Mammary epithelial cell (primary cell): ENCODE measurements at regions of chr10 and their contacts with region 1.

Region 1: DNA sequence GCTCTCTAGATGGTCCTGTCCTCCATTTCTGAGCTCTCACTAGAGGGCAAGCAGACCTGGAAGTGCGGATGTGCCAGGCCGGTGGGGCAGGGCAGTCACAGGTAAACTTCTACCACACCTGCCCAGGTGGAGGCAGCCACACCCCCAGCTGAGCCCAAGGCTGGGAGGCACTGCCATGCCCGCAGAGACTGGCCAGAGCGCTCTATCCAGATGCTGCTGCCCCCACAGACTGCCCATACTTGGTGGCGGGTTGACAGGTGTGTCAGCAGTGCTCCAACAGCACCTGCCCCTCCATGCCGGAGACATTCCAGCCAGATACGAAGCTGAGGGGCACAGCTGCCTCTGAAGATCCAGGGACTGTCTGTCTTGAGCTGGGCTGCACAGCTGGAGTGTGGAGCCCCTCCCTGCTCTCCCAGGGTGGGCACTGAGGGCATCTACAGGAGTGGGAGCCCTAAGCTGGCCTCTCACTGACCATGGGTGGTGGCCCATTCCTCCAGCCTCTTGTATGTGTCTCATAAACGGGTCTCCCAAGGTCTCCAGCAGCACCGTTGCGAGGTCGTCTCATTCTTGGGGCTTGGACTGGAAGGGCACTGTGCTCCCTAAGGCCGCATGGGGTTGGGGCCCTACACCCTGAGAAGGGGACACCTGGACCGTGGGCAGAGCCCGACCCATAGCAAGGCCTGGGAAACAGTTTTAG is 38.2 kb upstream of the PPIF start:
- DNase-seq: no peak
- H3K4me3 ChIP-seq: no peak overlapping the region
- H3K27ac ChIP-seq: no peak overlapping the region
- H3K4me1 ChIP-seq: peaks cover 7% of the 10 kb centered on the region
- H3K27me3 ChIP-seq: no peaks in the 10 kb centered on the region
- CTCF ChIP-seq: no peak

Region 2: GRCh38 chr10:79068562-79069324 is 240.4 kb before region 1 on chr10 and contains the start of gene ZMIZ1:
- CTCF ChIA-PET with region 1: no interaction called
- dilution Hi-C with region 1: no loop called
- in situ Hi-C with region 1: no loop called
- intact Hi-C with region 1: no loop called
- DNase-seq: peak; percentile 89
- H3K4me3 ChIP-seq: peak within 1 kb of the TSS; percentile 62 to 84 (median 70)
- H3K27ac ChIP-seq: peak within 1 kb of the TSS; percentile 35
- H3K4me1 ChIP-seq: peaks cover 33% of the 10 kb centered on the region
- H3K27me3 ChIP-seq: no peaks in the 10 kb centered on the region
- CTCF ChIP-seq: peak; percentile 9 to 46
- total RNA-seq, gene ZMIZ1: 22.3 to 25.0 TPM

Region 3: DNA sequence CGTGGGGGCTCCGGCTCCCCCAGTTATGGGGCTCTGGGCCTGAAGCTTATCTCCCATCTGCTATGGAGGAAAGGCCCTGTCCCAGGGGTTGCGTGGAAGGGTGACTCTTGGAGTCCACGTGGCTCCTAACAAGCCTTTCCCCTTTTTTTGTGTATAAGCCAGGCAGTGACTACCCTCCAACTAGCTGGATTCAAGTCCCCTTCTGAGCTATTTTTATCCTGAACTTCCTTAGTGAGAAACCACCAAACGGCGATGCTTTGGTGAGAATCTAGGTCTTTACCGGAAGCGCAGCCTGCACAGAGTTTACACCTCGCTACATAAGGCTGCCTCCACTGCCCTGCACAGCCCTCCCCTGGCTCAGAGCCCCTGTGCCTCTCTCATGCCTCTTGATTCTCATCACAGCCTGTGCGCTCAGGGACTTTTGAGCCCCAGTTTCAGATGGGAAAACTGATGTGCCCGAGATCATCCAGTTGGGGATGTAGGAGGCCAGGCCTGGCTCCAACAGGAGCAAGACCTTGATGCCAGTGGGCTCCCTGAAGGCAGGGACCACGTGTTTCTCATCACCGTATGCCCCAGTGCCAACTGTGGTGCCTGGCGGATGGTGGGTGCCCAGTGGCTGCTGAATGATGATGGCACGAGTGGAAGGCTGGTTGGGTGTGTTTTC is 64.1 kb before region 1 on chr10:
- CTCF ChIA-PET with region 1: no interaction called
- dilution Hi-C with region 1: loop called (anchors 5 kb)
- in situ Hi-C with region 1: no loop called
- intact Hi-C with region 1: no loop called
- DNase-seq: no peak
- H3K4me3 ChIP-seq: no peak overlapping the region
- H3K27ac ChIP-seq: no peak overlapping the region
- H3K4me1 ChIP-seq: peaks cover 34% of the 10 kb centered on the region
- H3K27me3 ChIP-seq: no peaks in the 10 kb centered on the region
- CTCF ChIP-seq: no peak

Region 4: DNA sequence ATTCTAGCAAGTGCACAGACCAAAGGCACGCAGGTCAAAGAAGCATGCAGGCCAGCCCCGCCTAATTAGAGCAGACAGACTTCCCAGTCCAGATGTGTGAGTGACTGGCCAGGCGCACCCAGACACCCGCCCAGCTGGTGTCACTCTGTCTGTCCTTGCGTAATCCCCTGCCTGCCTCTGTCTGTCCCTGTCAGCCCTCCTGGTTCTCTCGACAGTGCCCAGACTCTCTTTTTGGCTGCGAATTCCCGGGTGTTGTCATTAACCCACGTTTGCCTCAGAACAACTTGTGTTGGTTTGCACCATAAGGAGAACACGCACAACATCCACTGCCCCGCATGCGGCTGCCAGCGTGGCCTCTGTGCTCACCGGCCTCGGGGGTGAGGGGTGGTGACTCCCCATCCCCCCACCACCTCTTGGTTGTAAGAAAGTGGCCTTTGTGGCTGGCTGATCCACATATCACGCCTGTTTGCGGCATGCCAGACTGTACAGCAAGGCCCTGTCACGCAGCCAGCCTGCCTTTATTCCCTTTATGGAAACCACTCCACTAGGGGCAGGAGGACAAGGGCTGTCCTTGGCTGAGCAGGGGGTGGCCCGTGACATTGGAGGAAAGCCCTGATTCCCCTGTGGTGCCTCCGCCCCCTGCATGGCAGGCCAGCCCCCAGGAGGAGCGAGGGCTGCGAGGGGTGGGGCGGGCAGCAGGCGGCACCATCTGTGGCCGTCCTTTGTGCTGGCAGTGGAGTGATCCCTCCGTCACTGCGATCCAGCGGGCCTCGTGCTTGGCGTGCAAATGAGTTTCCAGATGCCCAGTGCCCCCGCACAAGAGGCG is 34.6 kb before region 1 on chr10:
- CTCF ChIA-PET with region 1: no interaction called
- dilution Hi-C with region 1: no loop called
- in situ Hi-C with region 1: no loop called
- intact Hi-C with region 1: no loop called
- DNase-seq: peak; percentile 30
- H3K4me3 ChIP-seq: no peak overlapping the region
- H3K27ac ChIP-seq: no peak overlapping the region
- H3K4me1 ChIP-seq: peaks cover 29% of the 10 kb centered on the region
- H3K27me3 ChIP-seq: no peaks in the 10 kb centered on the region
- CTCF ChIP-seq: no peak